Right ventricle myocardium superior (tissue), 1 donor: ENCODE measurements at regions of chr15 and their contacts with region 1.

Region 1: GRCh38 chr15:63599401-63600000 is 2.3 kb downstream of the FBXL22 start:
- DNase-seq: peak; percentile 73
- ATAC-seq: peak; percentile 49

Region 2: GRCh38 chr15:63288778-63289378 is 310.6 kb before region 1 on chr15:
- intact Hi-C with region 1: no loop called
- DNase-seq: no peak
- ATAC-seq: peak; percentile 66

Region 3: DNA sequence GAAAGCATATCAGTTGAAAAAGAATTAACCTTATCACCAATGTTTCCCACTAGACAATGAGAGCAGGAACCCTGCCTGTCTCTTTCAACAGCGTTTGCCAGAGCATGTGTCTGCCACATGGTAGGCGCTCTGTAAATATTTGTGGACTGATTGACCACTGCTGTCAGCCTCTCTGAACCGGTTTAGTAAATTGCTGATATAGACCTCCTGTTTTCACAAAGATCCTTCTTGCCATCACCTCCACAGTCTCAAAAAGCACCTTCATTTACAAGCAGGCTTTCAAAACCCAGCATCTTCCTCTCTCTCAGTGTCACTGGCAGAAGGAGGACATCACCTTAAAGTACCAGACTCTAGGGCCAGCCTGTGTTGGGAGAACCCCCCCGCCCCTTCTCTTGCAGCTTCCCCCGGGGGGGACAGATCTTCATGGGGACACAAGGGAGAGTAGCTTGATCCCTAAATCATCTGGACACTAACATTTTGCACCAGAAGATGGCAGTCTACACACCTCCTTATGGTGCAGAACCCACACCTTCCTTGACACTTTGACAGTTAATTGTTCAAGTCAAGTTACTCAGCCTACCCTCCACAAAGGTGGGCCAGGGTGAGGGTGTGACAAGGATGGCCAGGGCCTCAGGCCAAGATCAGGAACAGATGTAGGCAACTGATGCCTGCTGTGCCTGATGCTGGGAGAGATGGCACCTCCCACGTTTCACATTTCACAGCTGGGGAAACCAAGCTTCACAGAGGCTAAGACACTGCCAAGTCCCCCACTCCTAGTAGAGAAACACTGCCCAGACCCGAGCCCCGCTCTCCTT is 132.9 kb before region 1 on chr15:
- intact Hi-C with region 1: loop called (anchors 5 kb)
- DNase-seq: no peak
- ATAC-seq: peak; percentile 85

Region 4: DNA sequence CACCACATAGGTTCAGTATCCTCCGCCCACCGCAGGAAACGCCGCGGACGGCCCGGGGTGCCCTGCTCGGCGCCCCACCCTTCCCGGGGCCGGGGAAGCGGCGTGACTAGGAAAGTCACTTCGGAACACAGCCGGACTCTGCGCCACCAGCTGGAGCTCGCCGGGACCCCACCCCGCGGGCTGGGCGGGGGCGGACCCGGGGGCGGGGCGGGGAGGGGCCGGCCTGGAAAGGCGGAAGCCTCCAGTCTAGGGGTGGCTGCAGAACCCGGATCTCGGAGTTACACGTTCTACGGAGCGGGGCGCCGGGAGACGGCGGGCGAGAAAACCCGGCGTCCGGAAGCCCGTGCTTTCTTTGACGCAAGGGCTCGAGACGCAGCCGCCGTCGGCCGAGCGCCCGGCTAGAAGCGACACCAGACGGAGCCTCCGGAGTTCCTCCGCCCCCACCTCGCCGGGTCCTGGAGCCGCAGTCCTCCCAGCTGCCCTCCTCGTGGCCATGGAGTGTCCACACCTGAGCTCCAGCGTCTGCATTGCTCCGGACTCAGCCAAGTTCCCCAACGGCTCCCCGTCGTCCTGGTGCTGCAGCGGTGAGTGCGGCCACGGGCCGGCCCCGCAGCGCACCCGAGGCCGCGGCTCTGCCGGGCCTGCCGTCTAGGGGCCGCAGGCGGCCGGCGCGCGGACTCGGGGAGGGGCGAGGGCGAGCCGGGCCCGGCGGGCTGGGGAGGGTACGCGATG is 95.1 kb before region 1 on chr15 and contains the start of gene USP3:
- intact Hi-C with region 1: loop called (anchors 5 kb)
- DNase-seq: peak; percentile 96
- ATAC-seq: peak; percentile 93
- total RNA-seq, gene USP3: 15.9 TPM